ENCODE measurements at regions of chr12 and their contacts with region 1.

Region 1: GRCh38 chr12:6708960-6709394 is 8.4 kb upstream of the PIANP start:
- DNase-seq: no peak
- H3K4me3 ChIP-seq: no peak overlapping the region
- H3K27ac ChIP-seq: no peak overlapping the region
- H3K4me1 ChIP-seq: no peaks in the 10 kb centered on the region
- H3K27me3 ChIP-seq: peaks cover 23% of the 10 kb centered on the region
- CTCF ChIP-seq: no peak
- POLR2A ChIP-seq: no peak

Region 2: GRCh38 chr12:6697584-6698351 is 11.2 kb before region 1 on chr12:
- intact Hi-C with region 1: loop called in 1 of 2 experiments (anchors 2 kb)
- DNase-seq: peak in 5 of 7 donors; percentile 26 to 73 (median 59)
- H3K4me3 ChIP-seq: no peak overlapping the region
- H3K27ac ChIP-seq: no peak overlapping the region
- H3K4me1 ChIP-seq: peaks cover 5 to 9% of the 10 kb centered on the region in 2 donors
- H3K27me3 ChIP-seq: peaks cover 48% of the 10 kb centered on the region
- CTCF ChIP-seq: peak in 5 of 6 experiments; percentile 37 to 49 (median 42)
- POLR2A ChIP-seq: no peak

Region 3: DNA sequence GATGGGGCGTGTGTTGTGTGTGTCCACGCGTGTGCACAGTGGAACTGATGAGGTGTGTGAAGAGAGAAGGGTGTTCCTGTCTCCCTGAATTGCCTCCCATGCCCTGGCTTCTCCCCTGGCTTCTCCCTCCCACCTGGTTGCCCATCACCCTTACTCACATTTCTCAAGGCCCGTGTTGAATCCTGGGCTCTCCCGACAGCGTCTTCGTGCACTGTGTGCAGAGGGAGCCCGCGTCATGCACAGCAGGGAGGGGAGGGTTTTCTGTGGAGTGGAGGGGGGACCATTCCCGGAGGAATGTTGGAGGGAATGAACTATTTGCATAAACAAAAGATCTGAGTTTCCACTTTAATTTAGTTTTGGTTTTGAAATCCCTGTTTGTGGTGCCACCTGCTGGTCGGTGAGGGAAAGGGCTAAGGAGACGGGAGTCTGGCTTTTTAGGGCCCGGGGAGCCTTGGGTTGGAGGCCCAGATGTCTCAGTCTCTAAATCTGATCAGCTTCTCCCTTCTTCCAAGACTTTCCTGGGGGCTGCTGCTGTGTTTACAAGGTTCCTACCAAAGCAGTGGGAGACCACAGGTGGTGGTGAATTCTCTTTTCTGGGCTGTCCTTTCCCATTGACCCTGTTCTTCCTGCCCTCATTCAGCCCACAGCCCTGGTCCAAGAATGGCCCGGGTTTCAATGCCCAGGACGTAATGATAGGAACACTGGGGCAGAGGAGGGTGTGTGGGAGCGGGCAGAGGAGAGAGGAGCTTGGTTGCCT is 383.4 kb after region 1 on chr12 and contains the start of gene C1R:
- intact Hi-C with region 1: no loop called
- DNase-seq: peak; percentile 66 to 92 (median 86)
- H3K4me3 ChIP-seq: peak within 1 kb of the TSS in 3 of 4 donors; percentile 15 to 58 (median 18)
- H3K27ac ChIP-seq: peak within 1 kb of the TSS in 4 of 5 donors; percentile 36 to 94 (median 66)
- H3K4me1 ChIP-seq: peaks cover 10 to 34% of the 10 kb centered on the region in 2 donors
- H3K27me3 ChIP-seq: no peaks in the 10 kb centered on the region
- CTCF ChIP-seq: peak; percentile 81 to 93 (median 86)
- POLR2A ChIP-seq: peak; percentile 25 to 37
- total RNA-seq, gene C1R: 10.3 to 1,160 (median 439) TPM